BJ (cell line): ENCODE measurements at regions of chr12 and their contacts with region 1.

Region 1: DNA sequence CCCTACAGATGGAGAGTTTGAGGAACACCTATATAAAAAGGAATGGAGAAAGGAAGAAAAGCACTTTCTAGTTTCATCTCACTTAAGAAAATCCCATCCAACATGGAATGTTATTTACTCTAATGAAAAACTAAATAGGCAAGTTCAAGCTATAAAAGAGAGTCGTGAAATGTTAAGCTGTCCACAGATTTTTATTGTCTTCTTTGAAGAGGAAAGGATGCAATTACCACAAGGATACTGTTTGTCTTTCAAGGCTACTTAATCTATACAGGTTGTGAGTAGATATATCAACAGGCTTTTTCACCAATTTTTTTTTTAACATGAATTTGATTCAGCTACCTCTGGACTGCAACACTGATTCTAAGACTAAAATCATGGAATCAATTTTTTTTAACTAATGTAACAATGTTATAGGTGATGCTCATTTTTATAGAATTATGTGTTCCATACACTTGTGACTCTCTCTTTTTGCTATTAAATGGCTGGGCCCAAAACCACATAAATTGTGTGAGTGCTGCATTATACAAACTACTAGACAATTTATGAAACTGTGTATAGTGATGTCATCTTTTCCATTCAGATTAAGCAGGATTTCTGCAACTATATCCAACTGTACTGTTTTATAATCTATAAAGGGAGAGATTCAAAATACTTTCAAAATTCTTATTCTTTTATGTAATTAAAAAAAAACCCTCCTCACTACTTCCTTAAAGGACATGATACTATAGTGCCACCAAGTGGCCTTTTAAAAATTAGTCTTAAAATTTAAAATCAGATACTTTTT is 26.8 kb upstream of the BMAL2 start:
- DNase-seq: no peak
- H3K4me3 ChIP-seq: no peak overlapping the region
- H3K27me3 ChIP-seq: no peaks in the 10 kb centered on the region
- CTCF ChIP-seq: 0 out of 2 replicates have a peak, but pooled peaks have one; percentile 26

Region 2: DNA sequence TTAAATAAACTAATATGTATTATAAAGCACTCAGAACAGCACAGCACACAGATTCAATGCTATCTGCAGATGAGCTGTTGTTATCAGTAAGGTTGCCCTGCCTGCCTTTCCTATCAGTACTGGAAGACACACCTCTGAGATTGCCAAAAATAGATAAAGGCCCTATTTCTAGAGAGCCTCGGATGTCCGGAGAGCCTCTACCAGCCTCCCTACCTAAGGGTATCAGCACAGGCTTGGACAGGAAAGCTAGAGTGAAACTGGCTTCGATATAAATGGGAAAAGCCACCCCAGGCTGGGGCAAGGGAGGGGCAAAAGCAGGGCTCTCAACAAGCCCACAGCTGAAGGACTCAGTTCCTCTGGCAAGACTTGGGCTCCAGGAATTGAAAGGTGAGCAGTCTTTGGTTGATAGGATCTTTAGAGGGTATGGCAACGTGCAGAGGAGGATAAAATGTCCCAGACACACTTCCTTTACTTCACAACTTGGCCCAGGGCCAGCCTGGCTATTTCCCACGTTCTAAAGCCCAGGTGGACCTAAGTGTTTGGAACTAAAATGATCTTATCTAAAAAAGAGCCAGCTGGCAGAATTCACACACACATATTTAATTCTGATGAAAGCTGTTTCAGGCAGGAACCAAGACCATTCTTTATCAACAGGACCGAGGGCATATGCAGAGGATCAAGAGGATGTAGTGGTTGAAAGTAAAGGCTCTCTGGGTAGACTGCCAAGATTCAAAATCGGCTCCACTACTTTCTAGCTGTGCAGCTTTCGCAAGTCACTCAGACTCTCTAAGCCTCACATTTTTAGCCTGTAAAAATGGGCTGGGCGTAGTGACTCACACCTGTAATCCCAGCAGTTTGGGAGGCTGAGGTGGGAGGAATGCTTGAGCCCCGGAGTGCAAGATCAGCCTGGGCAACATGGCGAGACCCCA is 435.1 kb before region 1 on chr12:
- CTCF ChIA-PET with region 1: interaction called, 5 read pairs
- POLR2A ChIA-PET with region 1: interaction called, 14 read pairs
- DNase-seq: no peak
- H3K4me3 ChIP-seq: no peak overlapping the region
- H3K27me3 ChIP-seq: peaks cover 4% of the 10 kb centered on the region
- CTCF ChIP-seq: no peak

Region 3: GRCh38 chr12:27024291-27024690 is 281.6 kb before region 1 on chr12:
- CTCF ChIA-PET with region 1: interaction called, 12 read pairs
- POLR2A ChIA-PET with region 1: no interaction called
- DNase-seq: no peak
- H3K4me3 ChIP-seq: no peak overlapping the region
- H3K27me3 ChIP-seq: no peaks in the 10 kb centered on the region
- CTCF ChIP-seq: no peak